ENCODE measurements at regions of chr7 and their contacts with region 1.

Region 1: DNA sequence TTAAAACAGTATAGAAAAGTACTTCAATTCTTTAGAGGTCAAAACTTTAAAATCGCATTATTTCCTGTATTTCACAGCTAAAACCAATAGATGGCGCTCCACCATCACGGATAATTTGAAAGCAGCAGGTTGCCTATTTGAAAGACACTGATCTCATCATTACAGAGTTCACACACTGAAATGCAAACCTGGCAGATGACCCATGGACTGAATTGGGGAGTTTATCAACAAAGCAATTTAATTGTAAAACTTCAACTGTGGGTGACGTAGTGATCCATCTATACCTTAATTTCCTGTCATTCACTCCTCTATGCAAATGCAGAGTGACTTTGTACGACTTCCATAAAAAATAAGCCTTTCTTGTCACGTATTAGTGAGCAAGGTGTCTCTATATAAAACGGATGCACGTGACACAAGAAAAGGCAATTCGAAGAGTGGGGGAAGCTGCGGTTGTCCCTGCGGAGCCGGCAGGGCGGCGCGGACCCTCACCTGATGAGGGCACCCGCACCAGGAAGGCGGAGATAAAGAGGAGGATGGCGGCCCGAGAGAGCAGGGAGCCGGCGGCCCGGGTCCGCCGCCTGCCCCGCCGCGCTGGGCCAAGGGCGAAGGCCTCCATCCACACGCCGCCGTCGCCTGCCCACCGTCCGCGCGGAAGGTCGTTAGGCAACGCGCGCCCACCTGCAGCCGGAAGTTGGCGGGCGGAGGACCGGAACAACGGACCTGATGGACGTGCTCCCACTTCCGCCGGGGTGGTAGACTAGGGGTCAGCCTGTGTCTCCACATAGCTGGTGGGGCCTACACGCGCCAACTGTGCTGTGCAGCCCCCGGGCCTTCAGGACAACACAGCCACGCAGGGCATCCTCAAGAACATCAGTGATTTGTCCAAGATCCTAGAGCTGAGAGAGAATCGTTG is at the start of gene ZPBP:
- DNase-seq: peak; percentile 55
- CTCF ChIP-seq: peak; percentile 74

Region 2: DNA sequence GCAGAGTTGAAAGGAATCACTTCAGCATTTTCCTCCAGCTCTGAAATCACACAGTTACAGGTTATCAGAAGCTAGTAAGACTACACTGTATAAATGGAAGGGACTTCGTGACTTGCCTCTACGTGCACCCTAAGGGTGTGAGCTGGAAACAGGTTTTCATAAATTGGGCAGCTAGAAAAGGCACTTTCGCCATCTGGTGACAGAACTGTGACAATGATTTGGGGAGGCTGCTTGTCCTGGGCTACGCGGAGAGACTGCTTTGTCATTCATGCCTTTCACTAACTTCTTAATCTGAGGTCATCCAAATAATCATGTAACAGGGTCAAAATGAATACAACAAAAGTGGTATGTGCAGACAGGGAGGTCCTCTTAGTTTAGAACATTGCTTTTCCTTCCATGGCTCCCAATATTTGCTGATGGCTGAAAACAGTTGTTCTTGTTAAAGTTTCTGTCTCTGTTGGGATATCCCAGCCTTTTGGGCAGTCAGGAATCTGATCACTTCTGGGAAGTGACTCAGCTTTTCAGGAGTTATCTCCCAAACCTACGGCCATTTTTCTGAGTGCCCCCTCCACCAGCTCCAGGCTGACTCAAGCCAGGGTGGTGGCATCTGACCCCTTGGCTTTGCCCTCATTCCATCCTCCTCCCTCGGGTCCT is 301.6 kb before region 1 on chr7:
- in situ Hi-C with region 1: no loop called
- DNase-seq: peak; percentile 65
- CTCF ChIP-seq: peak; percentile 78

Region 3: GRCh38 chr7:50664461-50664922 is 571.7 kb after region 1 on chr7:
- in situ Hi-C with region 1: loop called (anchors 25 kb)
- DNase-seq: peak; percentile 55
- CTCF ChIP-seq: no peak

Measured in GM13977 (cell line).